ENCODE measurements at regions of chr7 and their contacts with region 1.

Region 1: DNA sequence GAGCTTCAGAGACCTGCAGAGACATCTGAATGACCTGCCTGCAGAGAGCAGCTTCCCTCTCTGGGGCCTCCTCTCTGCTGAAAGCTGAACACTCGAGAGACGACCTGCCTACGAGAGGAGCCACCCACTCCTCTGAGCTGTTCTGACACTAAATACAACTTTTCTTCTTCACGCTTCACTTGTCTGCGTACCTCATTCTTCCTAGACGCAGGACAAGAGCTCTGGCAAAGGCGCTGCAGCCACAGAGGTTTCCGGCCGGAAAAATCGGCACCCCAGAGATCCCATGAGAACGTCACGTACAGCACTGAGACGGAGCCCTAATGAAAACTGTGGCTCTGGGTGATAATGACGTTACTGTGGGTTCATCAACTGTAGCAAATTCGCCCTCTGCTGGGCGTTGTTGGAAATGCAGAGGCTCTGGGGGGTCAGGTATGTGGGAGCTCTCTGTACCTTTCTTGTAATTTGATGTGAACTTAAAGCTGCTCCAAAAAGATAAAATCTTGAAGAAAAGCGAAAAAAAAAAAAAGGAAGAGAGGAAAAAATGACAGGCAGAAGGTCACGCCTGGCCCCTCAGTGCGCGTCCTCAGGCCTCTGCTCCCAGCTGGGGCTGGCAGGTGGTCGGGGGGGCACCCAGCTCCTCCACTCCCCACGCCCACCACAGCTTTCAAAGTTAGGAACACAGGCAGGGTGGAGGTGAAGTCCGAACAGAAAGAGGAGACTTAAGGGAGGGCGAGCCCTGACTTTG is 120.7 kb downstream of the DYNC2I1 start:
- DNase-seq: peak; percentile 92
- ATAC-seq: peak; percentile 82
- H3K4me3 Mint-ChIP-seq: peak overlapping the region; percentile 68
- H3K27ac Mint-ChIP-seq: peak overlapping the region; percentile 85
- H3K4me1 Mint-ChIP-seq: peaks cover 17% of the 10 kb centered on the region
- H3K27me3 Mint-ChIP-seq: no peaks in the 10 kb centered on the region

Region 2: DNA sequence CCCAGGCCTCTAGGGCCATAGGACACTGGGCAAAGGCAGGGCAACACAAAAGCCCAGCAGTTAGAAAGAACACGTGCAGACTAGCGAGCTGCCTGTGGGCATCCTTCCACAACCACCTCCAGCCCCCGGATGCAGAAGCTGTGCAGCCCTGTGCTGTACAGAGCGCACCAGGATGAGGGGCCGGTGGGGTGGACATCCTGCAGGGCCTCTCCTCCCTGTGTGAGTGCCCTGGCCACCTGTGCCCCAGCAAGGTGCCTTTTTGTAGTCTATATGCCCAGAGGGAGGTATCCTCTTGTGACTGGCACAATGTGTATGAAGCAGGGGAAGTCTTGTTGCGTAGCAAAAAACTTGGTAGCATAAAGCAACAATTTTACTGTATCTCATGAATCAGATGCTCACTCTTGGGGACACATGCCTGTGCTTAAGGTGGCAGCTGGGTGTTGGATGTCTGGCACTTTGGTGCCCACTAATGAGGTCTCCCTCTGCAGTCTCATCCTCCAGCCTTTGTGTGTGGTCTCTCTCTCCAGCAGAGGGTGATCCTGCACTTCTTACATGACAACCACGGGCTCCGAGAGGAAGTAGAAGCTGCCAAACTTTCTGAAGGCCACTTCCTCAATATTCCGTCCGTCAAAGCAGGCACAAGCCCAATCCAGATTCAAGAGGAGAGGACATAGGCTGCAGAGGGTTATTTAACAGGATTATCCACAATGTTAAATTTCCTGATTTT is 281.1 kb before region 1 on chr7:
- CTCF ChIA-PET with region 1: interaction called, 15 read pairs
- DNase-seq: no peak
- ATAC-seq: no peak
- H3K4me3 Mint-ChIP-seq: no peak overlapping the region
- H3K27ac Mint-ChIP-seq: peak overlapping the region; percentile 22
- H3K4me1 Mint-ChIP-seq: peaks cover 52% of the 10 kb centered on the region
- H3K27me3 Mint-ChIP-seq: no peaks in the 10 kb centered on the region

Region 3: GRCh38 chr7:158863611-158864506 is 113.2 kb before region 1 on chr7:
- CTCF ChIA-PET with region 1: interaction called, 19 read pairs
- DNase-seq: peak; percentile 64
- ATAC-seq: peak; percentile 68
- H3K4me3 Mint-ChIP-seq: peak overlapping the region; percentile 72
- H3K27ac Mint-ChIP-seq: peak overlapping the region; percentile 85
- H3K4me1 Mint-ChIP-seq: peaks cover 45% of the 10 kb centered on the region
- H3K27me3 Mint-ChIP-seq: no peaks in the 10 kb centered on the region

Region 4: DNA sequence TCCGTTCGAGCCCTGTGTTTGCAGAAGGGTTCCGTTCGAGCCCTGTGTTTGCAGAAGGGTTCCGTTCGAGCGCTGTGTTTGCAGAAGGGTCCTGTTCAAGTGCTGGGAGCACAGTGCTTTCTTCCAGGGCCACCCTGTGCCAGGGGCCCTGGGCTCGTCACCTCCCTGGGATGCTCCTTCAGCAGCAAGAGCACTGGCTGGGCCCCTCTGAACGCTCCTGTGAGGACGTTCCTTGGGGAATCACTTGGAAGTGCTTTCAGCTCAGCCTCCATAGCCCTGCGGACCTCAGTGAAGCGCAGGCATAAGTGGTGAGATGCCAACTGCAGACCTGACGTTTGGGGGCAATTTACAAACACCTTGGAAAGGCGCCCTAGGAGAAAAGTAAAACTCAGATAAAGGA is 17.1 kb before region 1 on chr7:
- CTCF ChIA-PET with region 1: interaction called, 13 read pairs
- DNase-seq: no peak
- ATAC-seq: no peak
- H3K4me3 Mint-ChIP-seq: no peak overlapping the region
- H3K27ac Mint-ChIP-seq: no peak overlapping the region
- H3K4me1 Mint-ChIP-seq: peaks cover 10% of the 10 kb centered on the region
- H3K27me3 Mint-ChIP-seq: peaks cover 24% of the 10 kb centered on the region

Measured in activated CD8-positive, alpha-beta memory T cell treated with anti-CD3 and anti-CD28 coated beads, Interleukin-2, amount 10 ng/mL, durations not matched to agents 7 days and 5 days (primary cell).